HEK293 (cell line): ENCODE measurements at regions of chr18 and their contacts with region 1.

Region 1: DNA sequence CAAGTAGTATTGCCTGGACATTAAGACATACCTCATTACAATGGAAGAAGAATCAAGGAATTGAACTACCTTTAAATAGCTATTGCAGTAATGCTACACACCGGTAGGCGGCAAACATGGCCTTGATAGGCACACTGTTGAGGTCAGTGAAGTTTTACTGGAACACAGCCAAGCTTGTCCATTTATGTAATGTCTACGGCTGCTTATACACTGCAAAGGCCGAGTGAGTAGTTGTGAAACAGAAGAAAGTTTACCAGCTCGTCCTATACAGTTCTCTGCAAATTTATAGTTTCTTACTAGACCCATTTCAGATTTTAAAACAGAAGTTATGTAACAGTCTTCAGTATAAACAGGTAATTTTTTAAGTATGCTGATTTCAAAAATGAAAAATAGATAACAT is 38.8 kb downstream of the PPP4R1 start:
- H3K4me3 ChIP-seq: no peak overlapping the region
- H3K27ac ChIP-seq: no peak overlapping the region
- H3K4me1 ChIP-seq: no peaks in the 10 kb centered on the region; the same call in 1 of the 2 replicates
- CTCF ChIP-seq: peak; percentile 64

Region 2: GRCh38 chr18:9561759-9562158 is 13.8 kb before region 1 on chr18:
- CTCF ChIA-PET with region 1: interaction called, 31 read pairs
- POLR2A ChIA-PET with region 1: no interaction called
- H3K4me3 ChIP-seq: no peak overlapping the region
- H3K27ac ChIP-seq: no peak overlapping the region
- H3K4me1 ChIP-seq: no peaks in the 10 kb centered on the region
- CTCF ChIP-seq: no peak

Region 3: GRCh38 chr18:9612215-9612830 is 36.8 kb after region 1 on chr18:
- CTCF ChIA-PET with region 1: interaction called, 14 read pairs
- POLR2A ChIA-PET with region 1: interaction called, 3 read pairs
- H3K4me3 ChIP-seq: peak overlapping the region; percentile 72
- H3K27ac ChIP-seq: no peak overlapping the region
- H3K4me1 ChIP-seq: peaks cover 12% of the 10 kb centered on the region
- CTCF ChIP-seq: peak; percentile 60; the same call in 1 of the 2 replicates

Region 4: GRCh38 chr18:9671211-9671610 is 95.7 kb after region 1 on chr18:
- CTCF ChIA-PET with region 1: interaction called, 10 read pairs
- POLR2A ChIA-PET with region 1: no interaction called
- H3K4me3 ChIP-seq: no peak overlapping the region
- H3K27ac ChIP-seq: no peak overlapping the region
- H3K4me1 ChIP-seq: no peaks in the 10 kb centered on the region
- CTCF ChIP-seq: no peak

Region 5: DNA sequence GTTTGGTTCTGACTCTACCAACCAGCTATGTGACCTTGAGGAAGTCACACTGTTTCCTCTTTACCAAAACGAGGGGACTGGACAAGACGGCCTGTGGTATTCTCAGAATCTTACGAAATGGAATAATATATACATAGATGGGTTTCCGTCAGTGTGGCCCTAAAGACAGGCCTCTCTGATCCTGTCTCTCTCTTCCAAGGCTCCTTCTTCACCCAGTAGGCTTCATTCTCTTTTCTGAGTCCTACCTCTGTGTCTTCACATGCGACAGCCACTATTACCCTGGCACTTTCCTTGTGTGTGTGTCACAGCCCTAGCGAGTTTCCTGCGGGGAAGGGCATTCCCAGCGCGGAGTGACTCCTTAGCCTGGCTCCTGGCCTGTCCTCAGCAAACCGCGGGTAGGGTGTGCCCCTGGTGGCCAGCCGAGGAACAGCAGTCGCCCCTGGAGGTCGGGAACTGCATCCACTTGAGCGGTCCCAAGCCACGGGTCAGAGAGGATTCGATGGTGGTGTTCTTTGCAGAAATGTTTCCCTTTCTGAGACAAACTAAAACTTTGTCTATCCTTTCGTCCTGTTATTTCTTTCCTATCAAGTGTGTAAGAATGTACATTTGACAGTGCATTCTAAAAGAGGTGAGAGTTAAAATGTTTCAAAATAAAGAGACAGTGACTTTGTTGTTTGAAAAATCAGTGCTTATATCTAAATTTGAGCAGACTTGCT is 195.9 kb after region 1 on chr18:
- CTCF ChIA-PET with region 1: interaction called, 11 read pairs
- POLR2A ChIA-PET with region 1: no interaction called
- H3K4me3 ChIP-seq: no peak overlapping the region
- H3K27ac ChIP-seq: no peak overlapping the region
- H3K4me1 ChIP-seq: no peaks in the 10 kb centered on the region
- CTCF ChIP-seq: peak; percentile 79